Calu3 (cell line): ENCODE measurements at regions of chr10 and their contacts with region 1.

Region 1: GRCh38 chr10:64033711-64034110 is 512.5 kb downstream of the REEP3 start:
- DNase-seq: no peak
- H3K4me3 Mint-ChIP-seq: no peak overlapping the region
- H3K27ac Mint-ChIP-seq: no peak overlapping the region
- H3K4me1 Mint-ChIP-seq: peaks cover 11% of the 10 kb centered on the region
- H3K27me3 Mint-ChIP-seq: peaks cover 7% of the 10 kb centered on the region
- CTCF ChIP-seq: no peak

Region 2: GRCh38 chr10:63866075-63866746 is 167.5 kb before region 1 on chr10:
- CTCF ChIA-PET with region 1: no interaction called
- intact Hi-C with region 1: loop called (anchors 5 kb)
- DNase-seq: peak; percentile 64
- H3K4me3 Mint-ChIP-seq: peak overlapping the region; percentile 3
- H3K27ac Mint-ChIP-seq: no peak overlapping the region
- H3K4me1 Mint-ChIP-seq: peaks cover 22% of the 10 kb centered on the region
- H3K27me3 Mint-ChIP-seq: peaks cover 53% of the 10 kb centered on the region
- CTCF ChIP-seq: peak; percentile 90

Region 3: DNA sequence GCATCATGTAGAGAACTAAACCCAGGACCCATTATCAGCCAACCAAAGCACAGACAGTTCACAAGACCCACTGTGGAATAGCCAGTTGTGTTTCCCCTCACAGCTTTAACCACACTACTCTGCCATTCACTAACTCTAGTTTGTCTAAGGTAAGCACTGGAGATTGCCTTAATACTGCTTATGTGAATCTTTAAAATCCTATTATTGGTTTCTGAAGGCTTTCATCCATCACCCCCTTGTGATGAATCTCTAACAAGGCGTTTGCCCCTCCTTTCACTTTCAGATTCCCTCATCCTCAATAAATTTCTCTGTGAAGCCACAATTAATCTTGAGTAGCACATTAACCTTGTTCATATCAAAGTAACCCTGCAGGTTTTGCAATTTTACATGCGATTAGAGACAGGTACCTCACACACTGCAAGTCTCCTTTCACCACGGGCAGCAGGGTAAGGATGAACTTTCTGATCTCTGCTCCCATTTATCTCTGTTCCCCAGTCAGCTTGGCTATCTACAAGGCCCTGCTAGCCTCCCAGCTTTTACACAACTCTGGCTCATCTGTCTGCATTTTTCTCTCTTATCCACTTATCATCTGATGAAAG is 273.1 kb after region 1 on chr10:
- CTCF ChIA-PET with region 1: no interaction called
- intact Hi-C with region 1: no loop called
- DNase-seq: no peak
- H3K4me3 Mint-ChIP-seq: no peak overlapping the region
- H3K27ac Mint-ChIP-seq: no peak overlapping the region
- H3K4me1 Mint-ChIP-seq: peaks cover 9% of the 10 kb centered on the region
- H3K27me3 Mint-ChIP-seq: no peaks in the 10 kb centered on the region
- CTCF ChIP-seq: no peak